Astrocyte of the cerebellum (primary cell): ENCODE measurements at regions of chr2 and their contacts with region 1.

Region 1: GRCh38 chr2:141864921-141865320 is 265.9 kb downstream of the LRP1B start:
- DNase-seq: no peak
- H3K4me3 ChIP-seq: no peak overlapping the region
- CTCF ChIP-seq: no peak

Region 2: DNA sequence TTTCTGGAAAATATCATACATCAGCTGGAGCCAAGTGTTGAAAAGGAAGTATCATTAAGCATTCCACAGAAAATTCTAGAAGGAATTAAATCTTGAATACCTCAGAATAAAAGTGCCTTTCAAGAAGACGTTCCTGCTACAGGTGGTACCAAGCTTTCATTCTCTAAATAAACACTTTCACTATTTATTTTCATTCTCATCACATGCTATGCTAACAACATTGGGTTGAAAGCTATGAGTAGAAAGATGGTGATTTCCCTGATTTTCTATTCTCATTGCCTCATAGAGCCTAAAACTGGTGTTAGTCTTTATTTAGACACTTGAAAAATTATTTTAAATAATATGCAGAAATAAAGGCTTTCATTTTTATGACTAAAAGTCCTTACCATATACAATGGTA is 58.8 kb before region 1 on chr2:
- in situ Hi-C with region 1: loop called (anchors 5 kb)
- DNase-seq: no peak
- H3K4me3 ChIP-seq: no peak overlapping the region
- CTCF ChIP-seq: no peak

Region 3: GRCh38 chr2:141899740-141900139 is 34.8 kb after region 1 on chr2:
- in situ Hi-C with region 1: loop called (anchors 5 kb)
- DNase-seq: no peak
- H3K4me3 ChIP-seq: no peak overlapping the region
- CTCF ChIP-seq: no peak

Region 4: DNA sequence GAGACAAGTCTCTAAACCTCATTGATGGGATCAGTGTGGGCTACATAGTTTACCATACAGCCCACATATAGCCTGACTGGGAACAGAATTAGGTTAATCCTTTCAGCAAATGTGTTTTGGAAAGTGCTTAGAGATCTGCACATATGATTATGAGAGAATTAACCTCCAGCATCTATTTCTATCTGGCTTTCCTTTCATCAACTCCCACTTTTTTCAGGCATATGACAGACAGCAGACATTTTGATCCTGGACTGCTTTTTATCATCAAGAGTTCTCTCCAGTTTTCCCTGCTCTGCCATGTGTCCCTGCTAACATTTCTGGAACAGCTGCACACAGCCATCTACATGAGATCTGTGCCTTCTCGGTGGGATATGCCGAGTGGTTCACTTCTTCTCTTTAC is 405.4 kb after region 1 on chr2:
- in situ Hi-C with region 1: no loop called
- DNase-seq: no peak
- H3K4me3 ChIP-seq: no peak overlapping the region
- CTCF ChIP-seq: no peak